A673 (cell line): ENCODE measurements at regions of chr16 and their contacts with region 1.

Region 1: DNA sequence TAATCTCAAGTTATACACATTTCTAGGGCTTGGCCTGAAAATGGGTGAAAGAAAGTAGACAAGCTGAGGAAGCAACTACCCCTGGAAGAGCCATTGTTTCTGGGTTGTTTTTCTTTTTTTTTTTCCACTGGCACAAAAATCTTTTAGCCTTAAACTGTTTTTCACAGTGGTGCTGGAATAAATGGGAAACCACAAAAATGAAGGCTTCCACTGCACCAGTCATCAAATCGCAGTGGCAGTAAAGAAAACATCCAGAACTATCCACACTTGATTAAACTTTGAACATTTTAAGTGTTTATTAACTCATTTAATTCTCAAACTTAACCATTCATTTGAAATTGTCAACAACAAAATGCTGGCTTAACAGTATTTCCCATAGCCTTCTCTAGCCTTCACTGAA is 14.3 kb downstream of the CMTM4 start:
- DNase-seq: no peak
- H3K4me3 ChIP-seq: no peak overlapping the region
- H3K27ac ChIP-seq: no peak overlapping the region
- H3K4me1 ChIP-seq: no peaks in the 10 kb centered on the region
- H3K27me3 ChIP-seq: no peaks in the 10 kb centered on the region
- CTCF ChIP-seq: no peak

Region 2: DNA sequence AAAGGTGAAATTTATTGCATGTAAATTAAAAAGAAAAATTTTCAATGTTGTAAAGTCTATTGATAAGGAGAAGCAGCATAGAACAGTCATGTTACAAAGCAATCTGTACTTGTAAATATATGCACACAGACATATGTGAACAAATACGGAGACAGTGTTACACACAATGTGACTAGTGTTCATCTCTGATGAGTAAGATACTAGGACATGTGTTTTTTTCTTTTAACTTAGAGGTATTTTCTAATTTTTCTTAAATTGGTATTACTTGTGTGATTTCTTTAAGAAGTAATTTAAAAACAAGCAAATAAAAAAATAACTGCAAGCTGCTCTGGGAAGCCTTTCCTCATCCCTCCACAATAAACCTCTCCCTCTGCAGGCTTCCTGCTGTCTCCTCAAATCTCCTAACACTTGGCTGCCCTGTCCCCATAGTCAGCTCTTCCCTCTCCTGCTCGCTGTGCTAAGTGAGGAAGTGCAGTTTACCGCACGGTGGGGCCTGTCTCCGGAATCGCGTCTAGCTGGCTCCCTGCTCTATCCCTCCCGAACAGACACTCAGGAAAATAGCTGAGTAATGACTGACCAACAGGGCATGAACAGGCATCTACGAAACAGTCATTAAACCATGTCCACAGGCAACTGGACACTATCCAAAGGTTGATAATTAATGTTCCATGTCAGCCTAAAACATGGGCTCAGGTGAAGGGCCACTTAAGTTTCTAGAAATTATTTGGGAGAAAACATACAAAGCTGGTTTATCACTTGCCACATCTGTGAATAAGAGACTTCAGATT is 21.7 kb before region 1 on chr16:
- CTCF ChIA-PET with region 1: no interaction called
- POLR2A ChIA-PET with region 1: interaction called, 25 read pairs
- intact Hi-C with region 1: no loop called
- DNase-seq: peak; percentile 67
- H3K4me3 ChIP-seq: no peak overlapping the region
- H3K27ac ChIP-seq: peak overlapping the region; percentile 25
- H3K4me1 ChIP-seq: peaks cover 9% of the 10 kb centered on the region
- H3K27me3 ChIP-seq: no peaks in the 10 kb centered on the region
- CTCF ChIP-seq: 0 out of 2 replicates have a peak, but pooled peaks have one; percentile 15

Region 3: DNA sequence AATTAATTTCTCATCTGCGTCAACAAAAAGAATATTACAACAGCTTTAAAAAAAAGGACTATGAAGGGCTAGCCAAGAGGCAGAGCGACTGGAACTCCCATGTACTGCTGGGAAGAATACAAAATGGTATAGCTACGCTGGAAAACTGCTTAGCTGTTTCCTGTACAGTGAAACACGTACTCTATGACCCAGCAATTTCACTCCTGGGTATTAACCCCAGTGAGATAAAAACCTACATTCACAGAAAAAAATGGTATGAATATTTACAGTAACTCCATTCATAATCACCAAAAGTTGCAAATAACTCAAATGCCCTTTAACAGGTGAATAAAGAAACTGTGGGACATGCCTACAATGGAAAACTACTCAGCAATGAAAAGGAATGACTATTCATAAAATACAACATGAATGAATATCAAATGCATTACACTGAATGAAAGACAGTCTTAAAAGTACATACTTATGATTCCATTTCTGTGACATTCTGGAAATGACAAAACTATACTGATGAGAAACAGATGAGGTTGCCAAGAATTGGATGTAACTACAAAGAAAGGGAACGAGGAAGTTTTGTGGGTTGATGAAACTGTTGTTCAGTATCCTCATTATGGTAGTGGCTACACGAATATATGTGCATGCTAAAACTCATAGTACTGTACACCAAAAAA is 13.4 kb before region 1 on chr16:
- CTCF ChIA-PET with region 1: interaction called, 11 read pairs
- POLR2A ChIA-PET with region 1: no interaction called
- intact Hi-C with region 1: no loop called
- DNase-seq: no peak
- H3K4me3 ChIP-seq: no peak overlapping the region
- H3K27ac ChIP-seq: no peak overlapping the region
- H3K4me1 ChIP-seq: no peaks in the 10 kb centered on the region
- H3K27me3 ChIP-seq: no peaks in the 10 kb centered on the region
- CTCF ChIP-seq: no peak

Region 4: GRCh38 chr16:66728117-66728787 is 46.0 kb after region 1 on chr16:
- CTCF ChIA-PET with region 1: no interaction called
- POLR2A ChIA-PET with region 1: no interaction called
- intact Hi-C with region 1: no loop called
- DNase-seq: peak; percentile 76
- H3K4me3 ChIP-seq: no peak overlapping the region
- H3K27ac ChIP-seq: no peak overlapping the region
- H3K4me1 ChIP-seq: no peaks in the 10 kb centered on the region
- H3K27me3 ChIP-seq: no peaks in the 10 kb centered on the region
- CTCF ChIP-seq: peak; percentile 69

Region 5: GRCh38 chr16:67207857-67208519 is 525.7 kb after region 1 on chr16:
- CTCF ChIA-PET with region 1: no interaction called
- POLR2A ChIA-PET with region 1: no interaction called
- intact Hi-C with region 1: no loop called
- DNase-seq: no peak
- H3K4me3 ChIP-seq: no peak overlapping the region
- H3K27ac ChIP-seq: no peak overlapping the region
- H3K4me1 ChIP-seq: no peaks in the 10 kb centered on the region
- H3K27me3 ChIP-seq: no peaks in the 10 kb centered on the region
- CTCF ChIP-seq: no peak